Naive thymus-derived CD4-positive, alpha-beta T cell (primary cell): ENCODE measurements at regions of chr19 and their contacts with region 1.

Region 1: DNA sequence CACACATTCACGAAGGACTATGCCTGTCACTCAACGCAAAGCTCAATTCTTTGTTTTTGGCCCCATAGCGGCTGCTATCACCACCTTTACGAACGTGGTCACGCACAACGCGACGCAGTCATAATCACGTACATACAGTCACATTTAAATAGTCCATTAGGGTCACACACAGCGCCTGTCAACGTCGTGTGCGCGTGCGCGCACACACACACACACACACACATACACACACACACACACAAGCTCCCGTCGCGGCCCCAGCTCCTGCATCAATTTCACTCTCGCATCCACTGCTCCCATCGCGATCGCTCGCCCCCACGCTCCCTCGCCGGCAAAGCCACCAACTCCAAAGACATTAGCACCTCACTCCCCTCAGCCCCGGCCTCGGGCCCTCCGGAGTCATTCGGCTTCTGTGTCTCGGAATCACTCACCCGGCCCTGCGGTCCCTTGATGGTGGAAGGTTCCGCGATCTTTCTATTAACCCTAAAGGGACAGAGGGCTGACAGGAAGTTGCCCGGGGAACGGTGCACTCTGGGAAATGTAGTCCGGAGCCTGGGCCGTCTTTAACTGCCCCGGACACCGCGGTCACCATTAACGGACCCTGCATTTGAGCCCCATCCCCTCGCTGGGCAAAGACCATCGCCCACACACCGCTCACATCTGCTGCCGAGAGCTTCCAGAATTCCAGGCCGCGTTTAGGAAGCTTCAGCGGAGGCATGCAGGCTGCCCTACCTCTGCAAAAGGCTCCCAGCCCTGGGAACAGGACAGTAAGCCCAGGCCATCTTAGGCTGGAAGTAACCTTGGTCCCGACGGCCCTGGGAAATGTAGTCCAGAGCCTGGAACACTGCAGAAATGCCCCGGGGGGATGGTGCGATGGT is at the start of gene ZNF790:
- DNase-seq: peak; percentile 68 to 91 (median 85)
- ATAC-seq: peak; percentile 95
- H3K4me3 ChIP-seq: peak within 1 kb of the TSS; percentile 92
- H3K4me3 Mint-ChIP-seq: peak within 1 kb of the TSS in 1 of 10 donors; percentile 22
- H3K27ac ChIP-seq: peak within 1 kb of the TSS; percentile 92
- H3K27ac Mint-ChIP-seq: peak within 1 kb of the TSS in 5 of 9 donors; percentile 39 to 65 (median 51)
- H3K4me1 ChIP-seq: peaks cover 6 to 11% of the 10 kb centered on the region in 2 donors
- H3K4me1 Mint-ChIP-seq: peaks cover 0 to 21% (median 14%) of the 10 kb centered on the region in 7 donors
- H3K27me3 ChIP-seq: no peaks in the 10 kb centered on the region
- H3K27me3 Mint-ChIP-seq: no peaks in the 10 kb centered on the region
- total RNA-seq, gene ZNF790: 2.6 to 14.4 (median 7.3) TPM

Region 2: GRCh38 chr19:36378625-36379509 is 459.3 kb before region 1 on chr19 and contains the start of gene ZFP14:
- CTCF ChIA-PET with region 1: no interaction called
- POLR2A ChIA-PET with region 1: no interaction called
- intact Hi-C with region 1: loop called in 1 of 2 experiments (anchors 1 kb)
- DNase-seq: peak; percentile 86 to 95 (median 93)
- ATAC-seq: peak; percentile 99
- H3K4me3 ChIP-seq: peak within 1 kb of the TSS; percentile 86
- H3K4me3 Mint-ChIP-seq: peak within 1 kb of the TSS; percentile 82 to 98 (median 94)
- H3K27ac ChIP-seq: peak within 1 kb of the TSS; percentile 86
- H3K27ac Mint-ChIP-seq: peak within 1 kb of the TSS; percentile 55 to 98 (median 94)
- H3K4me1 ChIP-seq: peaks cover 0 to 10% of the 10 kb centered on the region in 2 donors
- H3K4me1 Mint-ChIP-seq: peaks cover 9 to 23% (median 21%) of the 10 kb centered on the region in 7 donors
- H3K27me3 ChIP-seq: no peaks in the 10 kb centered on the region
- H3K27me3 Mint-ChIP-seq: no peaks in the 10 kb centered on the region
- total RNA-seq, gene ZFP14: 5.3 to 24.0 (median 9.2) TPM

Region 3: DNA sequence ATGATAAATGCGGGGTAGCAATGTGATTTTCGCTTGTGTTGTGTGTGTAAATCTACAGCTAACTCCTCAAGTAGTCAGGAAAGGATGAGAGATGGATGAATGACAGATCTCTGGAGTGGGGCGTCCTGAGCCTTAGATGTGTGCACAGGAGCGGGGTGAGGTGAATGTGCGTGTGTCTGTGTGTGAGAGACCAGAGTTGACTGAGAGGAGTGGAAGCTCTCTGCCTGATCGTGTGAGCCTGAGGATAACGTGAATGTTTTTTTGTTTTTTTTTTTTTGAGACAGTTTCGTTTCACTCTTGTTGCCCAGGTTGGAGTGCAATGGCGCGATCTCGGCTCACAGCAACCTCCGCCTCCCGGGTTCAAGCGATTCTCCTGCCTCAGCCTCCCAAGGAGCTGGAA is 172.3 kb before region 1 on chr19:
- CTCF ChIA-PET with region 1: no interaction called
- POLR2A ChIA-PET with region 1: no interaction called
- intact Hi-C with region 1: loop called (anchors 1 to 2 kb)
- DNase-seq: peak in 1 of 9 donors; percentile 2
- ATAC-seq: no peak
- H3K4me3 ChIP-seq: peak overlapping the region; percentile 88
- H3K4me3 Mint-ChIP-seq: peak overlapping the region; percentile 91 to 100 (median 98)
- H3K27ac ChIP-seq: no peak overlapping the region
- H3K27ac Mint-ChIP-seq: peak overlapping the region; percentile 29 to 99 (median 93)
- H3K4me1 ChIP-seq: peaks cover 0 to 10% of the 10 kb centered on the region in 2 donors
- H3K4me1 Mint-ChIP-seq: peaks cover 17 to 42% (median 35%) of the 10 kb centered on the region in 7 donors
- H3K27me3 ChIP-seq: no peaks in the 10 kb centered on the region
- H3K27me3 Mint-ChIP-seq: no peaks in the 10 kb centered on the region

Region 4: DNA sequence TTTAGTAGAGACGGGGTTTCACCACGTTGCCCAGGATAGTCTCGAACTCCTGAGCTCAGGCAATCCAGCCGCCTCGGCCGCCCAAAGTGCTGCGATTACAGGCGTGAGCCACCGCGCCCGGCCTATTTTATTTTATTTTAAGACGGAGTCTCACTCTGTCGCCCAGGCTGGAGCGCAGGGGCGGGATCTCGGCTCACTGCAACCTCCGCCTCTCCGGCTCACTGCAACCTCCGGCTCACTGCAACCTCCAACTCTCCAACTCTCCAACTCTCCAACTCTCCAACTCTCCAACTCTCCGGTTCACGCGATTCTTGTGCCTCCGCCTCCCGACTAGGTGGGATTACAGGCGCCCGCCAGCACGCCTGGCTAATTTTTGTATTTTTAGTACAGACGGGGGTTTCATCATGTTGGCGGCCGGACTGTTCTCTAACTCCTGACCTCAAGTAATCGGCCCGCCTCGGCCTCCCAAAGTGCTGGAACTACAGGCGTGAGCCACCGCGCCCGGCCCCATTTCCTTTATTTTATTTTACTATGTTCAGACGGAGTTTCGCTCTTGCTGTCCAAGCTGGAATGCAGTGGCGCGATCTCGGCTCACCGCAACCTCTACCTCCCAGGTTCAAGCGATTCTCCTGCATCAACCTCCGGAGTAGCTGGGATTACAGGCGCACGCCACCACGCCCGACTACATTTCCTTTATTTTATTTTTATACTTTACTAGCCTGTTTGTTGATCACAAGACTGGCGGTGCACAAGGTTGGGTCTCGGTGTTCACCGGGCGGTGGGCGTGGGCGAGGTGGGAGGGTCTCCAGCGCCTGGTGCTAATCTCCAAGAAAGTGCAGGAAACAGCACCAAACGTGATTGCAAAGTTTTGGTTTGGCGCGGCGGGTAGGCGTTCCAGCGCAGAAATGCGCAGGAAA is 41.8 kb before region 1 on chr19:
- CTCF ChIA-PET with region 1: no interaction called
- POLR2A ChIA-PET with region 1: interaction called, 3 read pairs
- intact Hi-C with region 1: loop called (anchors 1 kb)
- DNase-seq: no peak
- ATAC-seq: no peak
- H3K4me3 ChIP-seq: peak overlapping the region; percentile 100
- H3K4me3 Mint-ChIP-seq: peak overlapping the region; percentile 87 to 99 (median 98)
- H3K27ac ChIP-seq: peak overlapping the region; percentile 79
- H3K27ac Mint-ChIP-seq: peak overlapping the region; percentile 87 to 100 (median 98)
- H3K4me1 ChIP-seq: no peaks in the 10 kb centered on the region
- H3K4me1 Mint-ChIP-seq: peaks cover 0 to 28% (median 16%) of the 10 kb centered on the region in 7 donors
- H3K27me3 ChIP-seq: no peaks in the 10 kb centered on the region
- H3K27me3 Mint-ChIP-seq: peaks cover 0 to 10% (median 9%) of the 10 kb centered on the region in 5 donors

Region 5: GRCh38 chr19:37655689-37656371 is 817.7 kb after region 1 on chr19:
- CTCF ChIA-PET with region 1: no interaction called
- POLR2A ChIA-PET with region 1: no interaction called
- intact Hi-C with region 1: loop called in 1 of 2 experiments (anchors 10 kb)
- DNase-seq: peak; percentile 74 to 90 (median 86)
- ATAC-seq: peak; percentile 86
- H3K4me3 ChIP-seq: peak overlapping the region; percentile 95
- H3K4me3 Mint-ChIP-seq: peak overlapping the region; percentile 82 to 99 (median 96)
- H3K27ac ChIP-seq: peak overlapping the region; percentile 89
- H3K27ac Mint-ChIP-seq: peak overlapping the region; percentile 81 to 99 (median 97)
- H3K4me1 ChIP-seq: peaks cover 8 to 16% of the 10 kb centered on the region in 2 donors
- H3K4me1 Mint-ChIP-seq: peaks cover 28 to 40% (median 33%) of the 10 kb centered on the region in 7 donors
- H3K27me3 ChIP-seq: no peaks in the 10 kb centered on the region
- H3K27me3 Mint-ChIP-seq: peaks cover 0 to 3% (median 0%) of the 10 kb centered on the region in 5 donors